ENCODE measurements at regions of chr9 and their contacts with region 1.

Region 1: DNA sequence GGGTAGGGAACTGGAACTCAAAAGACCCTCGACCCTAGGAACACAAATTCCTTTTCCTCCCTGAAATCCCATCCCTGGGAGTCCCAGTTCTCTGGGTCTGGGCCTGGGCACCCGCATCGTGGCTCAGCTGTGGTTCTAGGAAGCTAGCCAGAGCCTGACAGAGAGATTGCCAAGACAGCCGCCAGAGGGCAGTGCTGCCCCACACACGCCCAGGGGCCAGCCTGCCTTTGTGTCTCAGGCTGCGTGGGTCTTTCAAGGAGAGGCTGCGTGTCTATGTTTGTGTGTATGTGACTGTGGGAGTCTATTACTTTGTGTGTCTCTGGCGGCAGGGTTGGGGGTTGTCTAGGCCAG is 32.0 kb upstream of the TTLL11 start:
- DNase-seq: peak; percentile 56
- ATAC-seq: peak; percentile 88
- H3K4me3 ChIP-seq: no peak overlapping the region
- H3K27ac ChIP-seq: no peak overlapping the region
- H3K4me1 ChIP-seq: peaks cover 0 to 12% of the 10 kb centered on the region in 2 experiments; a peak in 1 of 4 replicates
- H3K27me3 ChIP-seq: no peaks in the 10 kb centered on the region
- CTCF ChIP-seq: peak; percentile 92 to 97 (median 97)
- POLR2A ChIP-seq: no peak
- RAD21 ChIP-seq: peak; percentile 100

Region 2: DNA sequence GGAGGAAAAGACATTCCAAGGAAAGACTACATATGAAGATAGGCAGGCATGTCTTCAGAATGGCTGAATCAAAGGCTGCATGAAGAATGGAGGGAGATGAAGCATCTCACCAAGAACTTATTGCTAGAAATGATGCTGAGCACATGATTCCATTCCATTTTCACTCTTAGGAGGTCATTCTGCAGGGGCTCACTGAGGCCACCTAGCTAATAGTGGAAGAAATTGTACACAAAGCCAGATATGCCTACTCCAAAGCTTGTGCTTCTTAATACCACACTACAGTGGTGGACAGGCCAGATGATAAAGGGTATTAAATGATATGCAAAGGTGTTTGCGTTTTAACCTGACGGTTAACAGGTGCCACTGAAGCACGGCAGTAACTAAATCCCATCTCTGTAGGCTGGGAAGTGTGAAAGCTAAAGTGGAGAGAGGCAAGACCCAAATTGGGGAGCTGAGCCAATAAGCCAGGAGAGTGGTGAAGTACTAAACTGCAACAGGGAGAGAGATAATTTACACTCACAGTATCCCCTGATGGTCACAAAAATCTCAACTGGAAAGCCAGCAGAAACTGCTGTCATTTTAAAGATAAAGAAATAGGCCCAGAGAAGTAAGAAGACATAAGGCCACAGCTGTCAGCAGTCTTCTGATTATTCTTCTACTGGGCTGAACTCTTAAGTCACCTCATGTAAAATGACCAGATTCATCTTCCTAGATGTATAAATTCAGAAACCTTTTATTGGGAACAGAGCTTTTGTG is 19.9 kb after region 1 on chr9:
- CTCF ChIA-PET with region 1: interaction called, 10 read pairs
- POLR2A ChIA-PET with region 1: no interaction called
- RAD21 ChIA-PET with region 1: no interaction called
- intact Hi-C with region 1: no loop called
- DNase-seq: no peak
- ATAC-seq: peak; percentile 85
- H3K4me3 ChIP-seq: no peak overlapping the region
- H3K27ac ChIP-seq: no peak overlapping the region
- H3K4me1 ChIP-seq: no peaks in the 10 kb centered on the region
- H3K27me3 ChIP-seq: no peaks in the 10 kb centered on the region
- CTCF ChIP-seq: peak in 2 of 3 experiments; percentile 48 to 57; a peak in 4 of 6 replicates
- POLR2A ChIP-seq: no peak
- RAD21 ChIP-seq: peak; percentile 24; the same call in 1 of the 2 replicates

Region 3: GRCh38 chr9:122180651-122181050 is 55.5 kb after region 1 on chr9:
- CTCF ChIA-PET with region 1: no interaction called
- POLR2A ChIA-PET with region 1: no interaction called
- RAD21 ChIA-PET with region 1: no interaction called
- intact Hi-C with region 1: no loop called
- DNase-seq: peak; percentile 4
- ATAC-seq: peak; percentile 64
- H3K4me3 ChIP-seq: no peak overlapping the region
- H3K27ac ChIP-seq: no peak overlapping the region
- H3K4me1 ChIP-seq: peaks cover 4 to 20% of the 10 kb centered on the region in 2 experiments; a peak in 3 of 4 replicates
- H3K27me3 ChIP-seq: peaks cover 5% of the 10 kb centered on the region; the same call in 1 of the 2 replicates
- CTCF ChIP-seq: no peak
- POLR2A ChIP-seq: no peak
- RAD21 ChIP-seq: no peak

Region 4: DNA sequence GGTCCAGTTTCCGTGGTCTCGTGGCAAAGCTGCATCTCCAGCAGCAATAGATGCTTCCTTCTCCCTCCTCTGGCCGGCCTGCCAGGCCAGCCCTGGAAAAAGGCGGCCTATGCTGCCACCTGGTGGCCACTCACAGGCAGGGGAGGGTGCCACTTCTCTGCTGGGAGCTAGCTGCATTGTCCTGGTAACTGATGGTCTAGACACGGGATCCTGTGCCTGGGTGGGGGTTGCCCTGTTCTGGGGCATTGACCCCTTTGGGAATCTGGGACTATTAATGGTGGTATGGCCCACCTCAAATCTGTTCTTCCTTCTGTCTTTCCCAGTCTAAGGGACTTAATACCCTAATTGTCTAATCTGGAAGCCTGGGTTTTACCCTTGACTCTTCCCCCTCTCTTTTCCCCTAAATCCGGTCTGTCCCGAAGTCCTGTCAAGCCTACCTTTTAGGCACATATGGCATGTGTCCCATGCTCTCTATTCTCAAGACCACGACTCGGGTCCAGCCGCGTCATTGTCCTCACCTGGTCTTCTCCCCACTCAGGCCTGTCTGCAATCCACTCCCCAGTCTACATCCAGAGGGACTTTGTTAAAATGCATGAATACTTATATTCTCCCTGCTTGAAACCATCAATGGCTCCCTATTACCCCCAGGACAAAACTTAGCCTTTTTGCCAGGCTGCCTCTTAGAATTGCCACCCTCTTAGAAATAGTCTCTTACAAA is 225.7 kb after region 1 on chr9:
- CTCF ChIA-PET with region 1: interaction called, 229 read pairs
- POLR2A ChIA-PET with region 1: interaction called, 9 read pairs
- RAD21 ChIA-PET with region 1: interaction called, 39 to 43 read pairs
- intact Hi-C with region 1: loop called (anchors 1 kb)
- DNase-seq: peak; percentile 27
- ATAC-seq: peak; percentile 91
- H3K4me3 ChIP-seq: no peak overlapping the region
- H3K27ac ChIP-seq: no peak overlapping the region
- H3K4me1 ChIP-seq: peaks cover 3 to 13% of the 10 kb centered on the region in 2 experiments; a peak in 3 of 4 replicates
- H3K27me3 ChIP-seq: no peaks in the 10 kb centered on the region
- CTCF ChIP-seq: peak; percentile 93 to 97 (median 93)
- POLR2A ChIP-seq: no peak
- RAD21 ChIP-seq: peak; percentile 99

Region 5: GRCh38 chr9:122810306-122810946 is 685.3 kb after region 1 on chr9:
- CTCF ChIA-PET with region 1: interaction called, 8 read pairs
- POLR2A ChIA-PET with region 1: no interaction called
- RAD21 ChIA-PET with region 1: no interaction called
- intact Hi-C with region 1: loop called (anchors 1 kb)
- DNase-seq: peak; percentile 61
- ATAC-seq: peak; percentile 96
- H3K4me3 ChIP-seq: no peak overlapping the region
- H3K27ac ChIP-seq: no peak overlapping the region
- H3K4me1 ChIP-seq: peaks cover 1 to 6% of the 10 kb centered on the region in 2 experiments; a peak in 3 of 4 replicates
- H3K27me3 ChIP-seq: no peaks in the 10 kb centered on the region
- CTCF ChIP-seq: peak; percentile 54 to 89 (median 85)
- POLR2A ChIP-seq: no peak
- RAD21 ChIP-seq: peak; percentile 97

Measured in HCT116 (cell line).